Left cardiac atrium (tissue), 4 donors: ENCODE measurements at regions of chr2 and their contacts with region 1.

Region 1: DNA sequence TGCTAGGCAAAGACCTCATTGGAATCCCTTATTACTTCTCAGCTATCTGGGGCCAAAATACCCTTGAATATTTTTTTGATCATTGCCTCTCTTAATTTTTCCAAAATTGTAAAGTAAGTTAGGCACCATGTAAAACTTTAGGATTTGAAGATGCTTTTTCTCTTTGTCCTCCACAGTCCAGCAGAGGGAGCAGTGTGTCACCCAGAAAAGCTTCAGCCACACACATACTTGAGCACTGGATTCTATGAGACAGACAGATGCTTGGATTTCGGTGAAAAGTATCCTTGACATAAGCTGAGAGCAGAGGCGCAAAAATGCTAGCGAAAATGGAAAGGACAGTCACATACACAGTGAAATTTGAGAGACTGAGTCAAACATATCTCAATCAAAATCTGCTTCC is 74.7 kb upstream of the KCNJ3 start:
- DNase-seq: peak; percentile 21
- ATAC-seq: peak; percentile 66 to 88

Region 2: DNA sequence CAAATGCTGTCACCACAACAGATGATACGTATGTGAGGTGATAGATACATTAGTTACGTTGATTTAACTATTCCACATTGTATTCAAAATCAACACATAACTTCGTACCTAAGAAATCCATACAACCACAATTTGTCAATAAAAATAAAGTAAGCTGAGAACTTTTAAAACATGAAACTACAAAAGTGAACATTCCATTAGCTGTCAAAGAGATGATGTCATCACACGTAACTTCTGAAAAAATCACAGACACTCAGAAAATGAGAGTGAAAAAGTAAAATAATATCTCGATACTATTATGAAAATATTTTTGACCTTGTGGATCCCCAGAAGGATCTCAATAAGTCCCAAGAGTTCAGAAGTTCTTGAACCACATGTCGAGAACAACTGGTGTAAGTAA is 913.7 kb before region 1 on chr2:
- intact Hi-C with region 1: no loop called
- DNase-seq: no peak
- ATAC-seq: no peak

Region 3: DNA sequence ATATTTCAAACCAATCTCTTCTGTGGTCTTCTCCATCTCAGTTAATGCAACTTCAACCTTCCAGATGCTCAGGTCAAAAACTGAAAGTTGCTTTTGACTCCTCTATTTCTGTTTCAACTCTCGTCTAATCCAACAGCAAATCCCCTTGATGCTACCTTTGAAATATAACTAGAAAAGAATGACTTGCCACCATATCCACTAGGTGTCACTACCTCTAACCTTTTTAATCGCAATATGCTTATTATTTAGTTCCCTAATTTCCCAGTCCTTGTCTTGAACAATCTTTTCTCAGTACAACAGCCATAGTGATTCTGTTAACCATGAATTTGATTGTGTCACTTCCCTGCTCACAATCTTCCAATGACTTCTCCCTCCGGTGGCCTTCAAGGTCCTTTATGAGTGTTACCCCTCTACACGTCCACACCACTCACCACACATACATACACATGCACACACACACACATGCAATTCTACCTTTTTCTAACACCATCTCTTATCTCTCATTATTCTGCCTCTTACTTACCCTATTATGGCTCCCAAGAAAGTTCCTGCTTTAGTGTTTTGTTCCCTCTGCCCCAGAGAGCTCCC is 170.8 kb before region 1 on chr2:
- intact Hi-C with region 1: loop called in 1 of 2 experiments (anchors 10 kb)
- DNase-seq: no peak
- ATAC-seq: peak; percentile 12 to 44

Region 4: GRCh38 chr2:154556146-154556545 is 67.7 kb before region 1 on chr2:
- intact Hi-C with region 1: no loop called
- DNase-seq: no peak
- ATAC-seq: no peak